Esophagus squamous epithelium (tissue), 5 donors: ENCODE measurements at regions of chr3 and their contacts with region 1.

Region 1: GRCh38 chr3:138928727-138929385 is 18.1 kb downstream of the FOXL2 start:
- DNase-seq: no peak
- H3K4me3 ChIP-seq: no peak overlapping the region
- H3K27ac ChIP-seq: no peak overlapping the region
- H3K4me1 ChIP-seq: no peaks in the 10 kb centered on the region
- H3K27me3 ChIP-seq: peaks cover 0 to 42% (median 0%) of the 10 kb centered on the region in 4 donors
- CTCF ChIP-seq: no peak
- POLR2A ChIP-seq: no peak

Region 2: GRCh38 chr3:138417559-138417982 is 511.3 kb before region 1 on chr3:
- intact Hi-C with region 1: loop called (anchors 5 kb)
- DNase-seq: no peak
- H3K4me3 ChIP-seq: no peak overlapping the region
- H3K27ac ChIP-seq: no peak overlapping the region
- H3K4me1 ChIP-seq: peaks cover 0 to 4% (median 0%) of the 10 kb centered on the region in 3 donors
- H3K27me3 ChIP-seq: peaks cover 0 to 23% (median 0%) of the 10 kb centered on the region in 4 donors
- CTCF ChIP-seq: peak; percentile 54 to 92 (median 86)
- POLR2A ChIP-seq: no peak

Region 3: GRCh38 chr3:138625707-138626365 is 303.0 kb before region 1 on chr3:
- intact Hi-C with region 1: no loop called
- DNase-seq: no peak
- H3K4me3 ChIP-seq: no peak overlapping the region
- H3K27ac ChIP-seq: no peak overlapping the region
- H3K4me1 ChIP-seq: peaks cover 0 to 11% (median 0%) of the 10 kb centered on the region in 3 donors
- H3K27me3 ChIP-seq: no peaks in the 10 kb centered on the region
- CTCF ChIP-seq: no peak
- POLR2A ChIP-seq: no peak